Activated B cell treated with CpG ODN at 0.5 μM for 24 hours (primary cell): ENCODE measurements at regions of chr20 and their contacts with region 1.

Region 1: DNA sequence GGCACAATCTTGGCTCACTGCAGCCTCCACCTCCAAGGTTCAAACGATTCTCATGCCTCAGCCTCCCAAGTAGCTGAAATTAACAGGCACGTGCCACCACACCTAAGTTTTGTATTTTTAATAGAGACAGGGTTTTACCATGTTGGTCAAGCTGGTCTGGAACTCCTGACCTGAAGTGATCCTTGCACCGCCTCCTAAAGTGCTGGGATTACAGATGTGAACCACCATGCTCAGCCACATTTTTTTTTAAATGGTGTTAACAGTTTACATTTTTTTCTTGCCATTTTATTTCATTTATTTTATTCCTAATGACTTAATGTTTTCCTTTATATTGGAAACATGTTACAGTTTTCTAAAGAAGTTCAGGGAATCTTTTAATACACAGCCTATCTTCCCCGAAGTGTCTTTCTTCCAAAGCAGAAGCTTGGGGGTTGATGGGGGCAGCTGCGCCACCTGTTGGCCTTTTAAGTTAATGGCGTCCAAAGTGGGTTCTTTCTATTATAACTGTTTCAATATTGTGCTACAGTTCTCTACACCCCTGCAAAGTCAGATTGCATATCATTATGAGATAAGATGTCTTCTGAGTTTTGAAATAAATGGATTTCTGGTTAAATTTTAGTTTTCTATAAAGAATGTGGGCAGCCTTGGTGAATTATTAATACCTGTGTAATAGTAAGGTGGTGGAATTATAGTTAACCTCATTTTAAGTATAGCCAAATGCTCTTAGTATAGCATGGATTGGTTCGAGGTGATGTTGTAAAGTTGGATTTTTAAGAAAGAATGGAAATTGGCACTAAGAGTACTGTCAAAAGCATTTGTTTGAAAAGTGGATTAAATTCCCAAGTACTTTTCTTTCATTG is 42.0 kb upstream of the PLCG1 start:
- DNase-seq: peak; percentile 26
- ATAC-seq: peak; percentile 69
- H3K4me3 Mint-ChIP-seq: no peak overlapping the region
- H3K27ac Mint-ChIP-seq: no peak overlapping the region
- H3K4me1 Mint-ChIP-seq: no peaks in the 10 kb centered on the region
- H3K27me3 Mint-ChIP-seq: no peaks in the 10 kb centered on the region
- CTCF ChIP-seq: peak; percentile 84

Region 2: DNA sequence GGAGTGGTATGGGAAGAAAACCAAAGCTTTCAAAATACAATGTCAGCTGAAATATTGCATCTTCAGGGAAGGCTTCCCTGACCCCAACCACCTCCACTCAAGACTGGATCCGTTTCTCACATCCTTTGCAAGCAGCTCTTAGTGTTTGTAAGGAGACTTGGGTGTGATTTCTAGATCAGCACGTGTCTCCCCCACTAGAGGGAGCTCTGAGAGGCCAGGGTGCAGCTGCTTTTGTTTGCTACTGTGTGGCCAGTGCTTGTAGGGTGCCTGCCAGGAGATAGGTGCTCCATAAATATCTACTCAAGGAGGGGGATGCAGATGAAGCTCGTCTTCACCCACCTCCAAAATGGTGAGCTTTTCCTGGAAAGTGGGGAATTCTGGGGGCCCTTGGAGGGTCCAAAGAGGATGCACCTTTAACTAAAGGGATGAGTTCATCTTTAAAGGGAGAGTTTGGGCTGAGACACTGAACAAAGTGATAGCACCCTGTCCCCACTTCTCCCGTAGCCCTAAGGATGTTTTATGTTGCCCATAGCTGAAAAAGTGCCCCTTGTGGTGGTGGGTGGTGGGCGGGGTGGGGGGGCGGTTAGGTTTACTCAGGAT is 353.7 kb before region 1 on chr20:
- CTCF ChIA-PET with region 1: no interaction called
- POLR2A ChIA-PET with region 1: no interaction called
- intact Hi-C with region 1: loop called (anchors 10 kb)
- DNase-seq: no peak
- ATAC-seq: no peak
- H3K4me3 Mint-ChIP-seq: no peak overlapping the region
- H3K27ac Mint-ChIP-seq: no peak overlapping the region
- H3K4me1 Mint-ChIP-seq: peaks cover 16% of the 10 kb centered on the region
- H3K27me3 Mint-ChIP-seq: peaks cover 7% of the 10 kb centered on the region
- CTCF ChIP-seq: no peak

Region 3: GRCh38 chr20:40970201-40970600 is 125.1 kb before region 1 on chr20:
- CTCF ChIA-PET with region 1: interaction called, 94 read pairs
- POLR2A ChIA-PET with region 1: no interaction called
- intact Hi-C with region 1: loop called (anchors 1 kb)
- DNase-seq: no peak
- ATAC-seq: no peak
- H3K4me3 Mint-ChIP-seq: no peak overlapping the region
- H3K27ac Mint-ChIP-seq: no peak overlapping the region
- H3K4me1 Mint-ChIP-seq: peaks cover 14% of the 10 kb centered on the region
- H3K27me3 Mint-ChIP-seq: peaks cover 2% of the 10 kb centered on the region
- CTCF ChIP-seq: no peak

Region 4: GRCh38 chr20:41072190-41072863 is 23.0 kb before region 1 on chr20:
- CTCF ChIA-PET with region 1: interaction called, 12 read pairs
- POLR2A ChIA-PET with region 1: no interaction called
- intact Hi-C with region 1: no loop called
- DNase-seq: no peak
- ATAC-seq: no peak
- H3K4me3 Mint-ChIP-seq: no peak overlapping the region
- H3K27ac Mint-ChIP-seq: no peak overlapping the region
- H3K4me1 Mint-ChIP-seq: peaks cover 49% of the 10 kb centered on the region
- H3K27me3 Mint-ChIP-seq: no peaks in the 10 kb centered on the region
- CTCF ChIP-seq: no peak

Region 5: GRCh38 chr20:41111578-41111951 is 16.2 kb after region 1 on chr20:
- CTCF ChIA-PET with region 1: interaction called, 10 read pairs
- POLR2A ChIA-PET with region 1: no interaction called
- intact Hi-C with region 1: no loop called
- DNase-seq: no peak
- ATAC-seq: peak; percentile 42
- H3K4me3 Mint-ChIP-seq: no peak overlapping the region
- H3K27ac Mint-ChIP-seq: no peak overlapping the region
- H3K4me1 Mint-ChIP-seq: peaks cover 12% of the 10 kb centered on the region
- H3K27me3 Mint-ChIP-seq: no peaks in the 10 kb centered on the region
- CTCF ChIP-seq: no peak